Natural killer cell (primary cell): ENCODE measurements at regions of chr17 and their contacts with region 1.

Region 1: GRCh38 chr17:38868817-38869525 is 887 bp upstream of the LASP1 start:
- DNase-seq: peak; percentile 88 to 89
- ATAC-seq: peak; percentile 46 to 71 (median 65)
- H3K4me3 ChIP-seq: peak overlapping the region; percentile 100
- H3K4me3 Mint-ChIP-seq: peak overlapping the region; percentile 100
- H3K27ac ChIP-seq: peak overlapping the region; percentile 88
- H3K27ac Mint-ChIP-seq: peak overlapping the region; percentile 96 to 98
- H3K4me1 ChIP-seq: peaks cover 48% of the 10 kb centered on the region
- H3K4me1 Mint-ChIP-seq: peaks cover 44 to 59% of the 10 kb centered on the region in 2 donors
- H3K27me3 ChIP-seq: no peaks in the 10 kb centered on the region
- H3K27me3 Mint-ChIP-seq: no peaks in the 10 kb centered on the region
- CTCF ChIP-seq: no peak

Region 2: DNA sequence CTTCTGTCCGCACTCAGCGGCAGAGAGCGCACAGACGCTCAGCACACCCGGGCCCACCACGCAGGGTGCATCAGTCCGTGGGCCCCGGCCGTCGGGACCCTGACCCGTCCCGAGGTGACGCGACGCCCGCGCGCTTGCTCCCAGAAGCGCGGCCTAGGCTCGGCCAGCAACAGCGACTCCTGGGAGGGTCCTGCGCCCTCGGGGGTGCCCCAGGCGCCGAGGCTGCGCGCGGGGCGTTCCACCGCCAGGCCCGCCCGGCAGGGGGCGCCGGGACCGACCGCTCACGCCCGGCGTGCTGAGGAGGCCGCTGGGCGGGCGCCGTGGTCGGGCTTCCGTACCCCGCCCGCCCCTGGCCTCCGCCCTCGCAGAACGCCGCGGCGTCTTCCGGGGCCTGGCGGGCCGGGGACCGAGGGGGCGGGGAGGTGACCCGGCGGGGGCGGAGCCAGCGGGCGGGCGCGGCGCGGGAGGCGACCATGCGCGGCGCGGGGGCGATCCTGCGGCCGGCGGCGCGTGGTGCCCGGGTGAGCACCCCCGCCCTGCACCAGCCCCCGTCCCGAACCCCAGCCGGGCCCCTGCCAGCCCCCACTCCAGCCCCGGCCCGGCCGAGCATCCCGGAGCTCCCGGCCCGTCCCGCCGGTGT is 139.0 kb before region 1 on chr17 and contains the start of gene CISD3:
- intact Hi-C with region 1: loop called (anchors 1 kb)
- DNase-seq: peak; percentile 88 to 95
- ATAC-seq: peak; percentile 68 to 89 (median 79)
- H3K4me3 ChIP-seq: peak within 1 kb of the TSS; percentile 69
- H3K4me3 Mint-ChIP-seq: peak within 1 kb of the TSS; percentile 95
- H3K27ac ChIP-seq: peak within 1 kb of the TSS; percentile 82
- H3K27ac Mint-ChIP-seq: peak within 1 kb of the TSS; percentile 98 to 99
- H3K4me1 ChIP-seq: peaks cover 83% of the 10 kb centered on the region
- H3K4me1 Mint-ChIP-seq: peaks cover 86 to 93% of the 10 kb centered on the region in 2 donors
- H3K27me3 ChIP-seq: no peaks in the 10 kb centered on the region
- H3K27me3 Mint-ChIP-seq: no peaks in the 10 kb centered on the region
- CTCF ChIP-seq: peak; percentile 59
- total RNA-seq, gene CISD3: 32.6 to 37.4 (median 33.9) TPM

Region 3: DNA sequence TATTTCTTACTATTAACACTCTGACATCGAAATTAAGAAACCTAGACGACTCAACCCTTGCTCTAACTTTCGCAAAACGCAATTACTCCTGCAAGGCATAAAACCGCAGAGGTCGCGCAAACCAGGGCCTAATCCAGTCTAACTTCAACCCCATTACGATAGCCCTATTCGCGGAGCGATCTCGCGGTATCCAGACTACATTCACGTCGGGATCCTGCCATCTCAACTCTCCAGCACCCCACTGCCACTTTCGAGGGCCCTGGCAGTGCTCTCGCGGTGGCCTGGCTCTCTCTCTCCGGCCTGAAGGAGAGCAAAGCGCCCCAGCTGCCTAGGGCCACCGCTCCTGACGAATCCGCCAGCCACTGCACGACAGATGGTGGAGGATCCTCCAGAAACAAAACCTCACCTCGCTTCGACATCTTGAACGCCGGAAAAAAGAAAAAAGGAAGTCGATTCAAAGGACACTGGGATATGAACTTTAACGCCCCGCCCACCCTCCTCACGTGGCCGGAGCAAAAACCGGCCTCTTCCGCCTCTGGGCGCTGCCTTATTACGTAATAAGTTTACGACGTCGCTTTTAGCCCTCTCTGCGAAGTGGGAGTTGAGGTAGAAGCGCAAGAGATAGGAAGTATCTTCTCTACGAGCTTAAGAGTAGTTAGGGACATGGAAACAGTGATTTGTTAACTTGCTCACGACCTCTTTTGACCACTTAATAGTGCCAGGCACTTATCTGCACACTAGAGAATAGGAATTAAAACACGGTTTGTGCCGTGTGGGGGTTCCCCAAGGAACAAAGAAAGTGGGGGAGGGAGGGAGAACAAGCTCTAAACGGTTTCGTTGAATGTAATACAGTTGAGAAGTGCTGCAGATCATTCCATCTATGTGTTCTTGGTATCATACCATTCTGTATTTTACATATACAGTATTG is 15.4 kb before region 1 on chr17 and contains the start of gene RPL23:
- intact Hi-C with region 1: loop called (anchors 1 kb)
- DNase-seq: peak; percentile 83 to 97
- ATAC-seq: peak; percentile 77 to 91 (median 87)
- H3K4me3 ChIP-seq: peak within 1 kb of the TSS; percentile 75
- H3K4me3 Mint-ChIP-seq: peak within 1 kb of the TSS; percentile 96
- H3K27ac ChIP-seq: peak within 1 kb of the TSS; percentile 98
- H3K27ac Mint-ChIP-seq: peak within 1 kb of the TSS; percentile 99
- H3K4me1 ChIP-seq: peaks cover 29% of the 10 kb centered on the region
- H3K4me1 Mint-ChIP-seq: peaks cover 42 to 45% of the 10 kb centered on the region in 2 donors
- H3K27me3 ChIP-seq: no peaks in the 10 kb centered on the region
- H3K27me3 Mint-ChIP-seq: no peaks in the 10 kb centered on the region
- CTCF ChIP-seq: no peak
- total RNA-seq, gene RPL23: 752 to 934 (median 923) TPM

Region 4: GRCh38 chr17:38889745-38890734 is 21.1 kb after region 1 on chr17:
- intact Hi-C with region 1: loop called (anchors 2 kb)
- DNase-seq: peak in 1 of 2 donors; percentile 55
- ATAC-seq: no peak
- H3K4me3 ChIP-seq: no peak overlapping the region
- H3K4me3 Mint-ChIP-seq: peak overlapping the region; percentile 39
- H3K27ac ChIP-seq: peak overlapping the region; percentile 40
- H3K27ac Mint-ChIP-seq: peak overlapping the region; percentile 90 to 92
- H3K4me1 ChIP-seq: peaks cover 97% of the 10 kb centered on the region
- H3K4me1 Mint-ChIP-seq: peaks cover 90 to 92% of the 10 kb centered on the region in 2 donors
- H3K27me3 ChIP-seq: no peaks in the 10 kb centered on the region
- H3K27me3 Mint-ChIP-seq: no peaks in the 10 kb centered on the region
- CTCF ChIP-seq: no peak

Region 5: DNA sequence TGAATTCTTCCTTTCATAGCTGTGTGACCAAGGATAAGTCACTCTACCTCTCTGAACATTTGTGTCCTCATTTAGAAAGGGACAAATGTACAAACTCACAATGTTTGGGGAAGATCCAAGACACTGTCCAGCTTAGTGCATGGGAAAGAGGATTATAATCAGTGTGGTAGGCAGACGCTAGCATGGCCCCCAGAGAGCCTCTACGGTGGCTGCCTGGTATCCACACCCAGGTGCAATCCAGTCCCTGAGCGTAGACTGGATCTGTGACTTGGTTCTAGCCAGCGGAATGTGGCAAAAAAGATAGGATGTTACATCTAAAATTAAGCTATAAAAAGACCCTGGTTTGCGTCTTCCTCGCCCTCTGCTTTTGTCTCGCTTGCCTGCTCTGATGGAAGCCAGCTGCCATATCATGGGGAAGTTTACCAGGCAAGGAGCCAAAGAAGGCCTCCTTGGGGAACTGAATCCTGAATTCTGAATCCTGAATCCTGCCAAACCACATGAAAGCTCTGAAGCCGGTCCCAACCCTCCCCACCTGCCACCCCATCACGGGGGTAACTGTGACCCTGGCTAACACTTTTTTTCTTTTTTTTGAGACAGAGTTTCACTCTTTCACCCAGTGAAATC is 230.8 kb after region 1 on chr17:
- intact Hi-C with region 1: loop called (anchors 10 kb)
- DNase-seq: no peak
- ATAC-seq: peak in 2 of 3 donors; percentile 38 to 60
- H3K4me3 ChIP-seq: no peak overlapping the region
- H3K4me3 Mint-ChIP-seq: peak overlapping the region; percentile 17
- H3K27ac ChIP-seq: no peak overlapping the region
- H3K27ac Mint-ChIP-seq: peak overlapping the region in 1 of 2 donors; percentile 14
- H3K4me1 ChIP-seq: peaks cover 55% of the 10 kb centered on the region
- H3K4me1 Mint-ChIP-seq: peaks cover 69 to 73% of the 10 kb centered on the region in 2 donors
- H3K27me3 ChIP-seq: no peaks in the 10 kb centered on the region
- H3K27me3 Mint-ChIP-seq: no peaks in the 10 kb centered on the region
- CTCF ChIP-seq: no peak